Gastrocnemius medialis (tissue), 4 donors: ENCODE measurements at regions of chr17 and their contacts with region 1.

Region 1: GRCh38 chr17:46212634-46213435 is 19.6 kb upstream of the KANSL1 start:
- DNase-seq: peak; percentile 48 to 60
- ATAC-seq: peak; percentile 87 to 92
- H3K4me3 ChIP-seq: no peak overlapping the region
- H3K27ac ChIP-seq: peak overlapping the region in 2 of 4 donors; percentile 2 to 41
- H3K4me1 ChIP-seq: peaks cover 14 to 21% of the 10 kb centered on the region in 2 donors
- H3K27me3 ChIP-seq: no peaks in the 10 kb centered on the region
- CTCF ChIP-seq: peak; percentile 75 to 86 (median 80)
- POLR2A ChIP-seq: no peak

Region 2: GRCh38 chr17:46002311-46002972 is 210.4 kb before region 1 on chr17:
- in situ Hi-C with region 1: loop called in 3 of 4 experiments (anchors 5 kb)
- intact Hi-C with region 1: loop called (anchors 1 kb)
- DNase-seq: peak; percentile 40 to 60
- ATAC-seq: peak; percentile 80 to 86
- H3K4me3 ChIP-seq: no peak overlapping the region
- H3K27ac ChIP-seq: peak overlapping the region in 3 of 4 donors; percentile 7 to 50 (median 8)
- H3K4me1 ChIP-seq: peaks cover 21 to 23% of the 10 kb centered on the region in 2 donors
- H3K27me3 ChIP-seq: no peaks in the 10 kb centered on the region
- CTCF ChIP-seq: peak; percentile 86 to 97 (median 96)
- POLR2A ChIP-seq: no peak

Region 3: GRCh38 chr17:46035112-46035818 is 177.6 kb before region 1 on chr17:
- in situ Hi-C with region 1: loop called in 3 of 4 experiments (anchors 10 kb)
- intact Hi-C with region 1: no loop called
- DNase-seq: no peak
- ATAC-seq: no peak
- H3K4me3 ChIP-seq: no peak overlapping the region
- H3K27ac ChIP-seq: peak overlapping the region in 2 of 4 donors; percentile 12 to 25
- H3K4me1 ChIP-seq: peaks cover 29 to 46% of the 10 kb centered on the region in 2 donors
- H3K27me3 ChIP-seq: no peaks in the 10 kb centered on the region
- CTCF ChIP-seq: no peak
- POLR2A ChIP-seq: no peak

Region 4: DNA sequence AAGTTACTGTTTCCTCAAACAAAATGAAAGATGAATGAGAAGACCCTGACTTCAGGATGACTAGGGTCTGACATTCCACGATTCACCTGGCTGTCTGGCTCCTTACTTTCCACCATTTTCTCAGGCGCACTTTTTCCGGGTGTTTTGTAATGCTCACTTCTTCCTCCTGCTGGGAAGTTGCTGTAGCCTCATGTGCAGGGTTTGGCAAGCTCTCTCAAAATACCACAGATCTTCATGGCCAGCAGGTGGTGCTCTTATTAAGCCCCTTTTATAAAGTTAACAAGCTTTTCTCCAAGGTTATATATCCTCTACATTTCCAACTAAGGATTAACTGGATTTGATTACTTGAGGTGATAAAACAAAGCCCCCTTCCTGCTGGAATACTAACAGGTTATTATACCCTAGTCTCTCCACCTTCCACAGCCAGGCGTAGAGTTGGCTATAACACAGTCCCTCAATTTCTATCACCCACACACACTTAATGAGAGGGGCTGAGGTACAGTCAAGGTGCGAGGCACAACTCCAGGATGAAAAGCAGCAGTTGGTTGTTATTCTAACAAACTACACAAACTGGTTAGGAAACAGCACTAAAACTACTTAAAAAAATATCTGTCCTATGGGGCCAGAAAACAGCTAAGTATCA is 168.4 kb before region 1 on chr17:
- in situ Hi-C with region 1: loop called in 3 of 4 experiments (anchors 10 kb)
- intact Hi-C with region 1: loop called (anchors 1 kb)
- DNase-seq: peak; percentile 80 to 84
- ATAC-seq: peak; percentile 86 to 89
- H3K4me3 ChIP-seq: no peak overlapping the region
- H3K27ac ChIP-seq: peak overlapping the region; percentile 65 to 77 (median 75)
- H3K4me1 ChIP-seq: peaks cover 39 to 50% of the 10 kb centered on the region in 2 donors
- H3K27me3 ChIP-seq: no peaks in the 10 kb centered on the region
- CTCF ChIP-seq: peak; percentile 83 to 92 (median 89)
- POLR2A ChIP-seq: no peak

Region 5: GRCh38 chr17:46264456-46265198 is 51.8 kb after region 1 on chr17:
- in situ Hi-C with region 1: no loop called
- intact Hi-C with region 1: no loop called
- DNase-seq: no peak
- ATAC-seq: no peak
- H3K4me3 ChIP-seq: no peak overlapping the region
- H3K27ac ChIP-seq: peak overlapping the region in 2 of 4 donors; percentile 8 to 38
- H3K4me1 ChIP-seq: peaks cover 7 to 19% of the 10 kb centered on the region in 2 donors
- H3K27me3 ChIP-seq: no peaks in the 10 kb centered on the region
- CTCF ChIP-seq: no peak
- POLR2A ChIP-seq: no peak